ENCODE measurements at regions of chr2 and their contacts with region 1.

Region 1: DNA sequence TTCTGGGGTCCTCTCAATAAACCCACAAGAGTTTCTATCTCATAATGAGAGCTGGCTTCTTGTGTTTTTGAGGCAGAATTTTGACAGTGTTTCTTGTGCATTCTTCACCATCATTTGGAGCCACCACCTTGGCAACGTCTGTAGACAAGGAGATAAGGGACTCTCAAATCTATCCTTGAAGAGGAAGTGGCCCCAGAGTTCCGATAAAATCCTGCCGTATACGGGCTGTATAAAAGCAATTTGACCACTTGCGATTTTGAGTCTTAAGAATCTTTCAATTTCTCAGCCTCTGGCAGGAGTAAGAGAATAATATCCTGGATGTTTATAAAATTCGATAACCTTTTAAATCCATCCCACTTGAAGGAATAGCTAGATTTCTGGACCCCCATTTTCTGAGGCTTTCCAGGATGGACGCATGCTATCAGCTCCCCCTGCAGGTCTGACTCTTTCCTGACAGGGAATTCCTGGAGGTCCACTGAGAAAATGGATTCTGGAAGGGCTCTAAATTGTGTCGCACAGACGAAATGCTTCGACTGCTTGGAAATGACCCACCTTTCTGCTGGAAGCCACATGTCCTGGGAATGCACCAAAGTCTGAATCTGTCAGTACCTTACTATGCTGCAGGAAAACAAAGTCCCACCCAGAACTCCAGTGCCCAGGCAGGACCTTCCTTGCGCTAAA is 54.1 kb downstream of the E2F6 start:
- DNase-seq: no peak
- ATAC-seq: peak; percentile 63 to 86
- H3K4me3 ChIP-seq: peak overlapping the region; percentile 55
- H3K27ac ChIP-seq: no peak overlapping the region
- H3K4me1 ChIP-seq: peaks cover 10% of the 10 kb centered on the region
- H3K27me3 ChIP-seq: no peaks in the 10 kb centered on the region
- CTCF ChIP-seq: peak; percentile 84

Region 2: DNA sequence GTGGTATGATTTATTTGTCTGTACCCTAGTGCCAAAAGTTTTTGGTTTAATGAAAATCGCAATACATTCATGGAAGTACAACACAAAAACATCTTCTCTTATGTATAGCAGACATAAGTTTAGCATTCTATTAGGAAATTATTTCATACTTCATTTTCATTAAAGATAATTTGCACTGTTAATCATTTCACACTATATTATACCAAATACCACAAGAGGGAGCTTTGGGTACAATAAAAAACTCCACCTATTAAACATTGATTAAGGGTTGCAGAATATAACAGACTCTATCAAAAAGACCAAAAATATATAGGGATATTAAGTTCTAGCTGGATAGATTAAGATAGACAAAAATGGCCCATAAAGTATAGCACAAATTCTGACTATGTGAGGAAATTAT is 177.6 kb before region 1 on chr2:
- intact Hi-C with region 1: loop called (anchors 5 kb)
- DNase-seq: no peak
- ATAC-seq: peak in 1 of 2 donors; percentile 56
- H3K4me3 ChIP-seq: no peak overlapping the region
- H3K27ac ChIP-seq: no peak overlapping the region
- H3K4me1 ChIP-seq: peaks cover 6% of the 10 kb centered on the region
- H3K27me3 ChIP-seq: no peaks in the 10 kb centered on the region
- CTCF ChIP-seq: peak; percentile 50

Measured in lower lobe of right lung (tissue), 2 donors.